PC-9 (cell line): ENCODE measurements at regions of chr1 and their contacts with region 1.

Region 1: DNA sequence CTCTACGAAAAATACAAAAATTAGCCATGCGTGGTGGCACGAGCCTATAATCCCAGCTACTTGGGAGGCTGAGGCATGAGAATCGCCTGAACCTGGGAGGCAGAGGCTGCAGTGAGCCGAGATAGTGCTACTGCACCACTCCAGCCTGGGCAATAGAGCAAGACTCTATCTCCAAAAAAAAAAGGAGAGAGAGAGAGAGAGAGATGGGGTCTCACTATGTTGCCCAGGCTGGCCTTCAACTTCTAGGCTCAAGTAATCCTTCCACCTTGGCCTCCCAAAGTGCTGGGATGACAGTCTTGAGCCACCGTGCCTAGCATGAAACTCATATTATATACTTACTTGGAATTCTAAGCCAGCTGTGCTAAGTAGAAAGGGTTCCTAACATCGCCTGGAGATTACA is 29.7 kb downstream of the PSMB2 start:
- DNase-seq: no peak
- H3K4me3 ChIP-seq: no peak overlapping the region
- H3K27ac ChIP-seq: no peak overlapping the region
- H3K4me1 ChIP-seq: no peaks in the 10 kb centered on the region
- H3K27me3 ChIP-seq: no peaks in the 10 kb centered on the region
- CTCF ChIP-seq: no peak

Region 2: DNA sequence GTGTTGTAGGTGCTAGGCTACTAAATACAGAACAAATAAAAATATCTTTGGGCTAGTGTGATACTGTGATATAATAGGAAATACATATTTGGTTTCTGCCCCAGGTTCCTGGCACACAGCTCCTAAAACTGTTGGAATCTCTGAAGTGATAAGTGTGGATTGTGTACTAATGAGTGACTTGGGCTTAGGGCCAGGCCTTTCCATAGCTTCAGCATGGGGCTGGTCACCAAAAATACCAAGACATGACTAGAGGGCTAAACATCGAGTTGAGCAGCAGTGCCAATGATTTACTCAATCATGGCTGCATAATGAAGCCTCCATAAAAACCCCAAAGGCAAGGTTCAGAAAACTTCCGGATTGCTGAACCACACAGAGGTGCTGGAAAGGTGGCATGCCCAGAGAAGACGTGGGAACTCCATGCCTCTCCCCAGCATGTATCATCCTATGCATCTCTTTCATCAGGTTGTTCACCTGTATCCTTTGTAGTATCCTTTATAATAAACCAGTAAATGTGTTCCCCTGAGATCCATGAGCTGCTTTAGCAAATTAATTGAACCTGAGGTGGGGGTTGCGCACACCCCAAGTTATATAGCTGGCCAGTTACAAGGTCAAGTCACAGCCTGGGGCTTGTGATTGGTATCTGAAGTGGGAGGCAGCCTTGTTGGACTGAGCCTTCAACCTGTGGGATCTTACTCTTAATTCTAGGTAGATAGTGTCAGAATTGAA is 291.5 kb before region 1 on chr1:
- CTCF ChIA-PET with region 1: no interaction called
- POLR2A ChIA-PET with region 1: no interaction called
- intact Hi-C with region 1: no loop called
- DNase-seq: no peak
- H3K4me3 ChIP-seq: no peak overlapping the region
- H3K27ac ChIP-seq: no peak overlapping the region
- H3K4me1 ChIP-seq: no peaks in the 10 kb centered on the region
- H3K27me3 ChIP-seq: no peaks in the 10 kb centered on the region
- CTCF ChIP-seq: no peak

Region 3: GRCh38 chr1:35585281-35585680 is 26.4 kb before region 1 on chr1:
- CTCF ChIA-PET with region 1: no interaction called
- POLR2A ChIA-PET with region 1: interaction called, 11 read pairs
- intact Hi-C with region 1: no loop called
- DNase-seq: no peak
- H3K4me3 ChIP-seq: no peak overlapping the region
- H3K27ac ChIP-seq: no peak overlapping the region
- H3K4me1 ChIP-seq: no peaks in the 10 kb centered on the region
- H3K27me3 ChIP-seq: no peaks in the 10 kb centered on the region
- CTCF ChIP-seq: no peak